Caco-2 (cell line): ENCODE measurements at regions of chr12 and their contacts with region 1.

Region 1: DNA sequence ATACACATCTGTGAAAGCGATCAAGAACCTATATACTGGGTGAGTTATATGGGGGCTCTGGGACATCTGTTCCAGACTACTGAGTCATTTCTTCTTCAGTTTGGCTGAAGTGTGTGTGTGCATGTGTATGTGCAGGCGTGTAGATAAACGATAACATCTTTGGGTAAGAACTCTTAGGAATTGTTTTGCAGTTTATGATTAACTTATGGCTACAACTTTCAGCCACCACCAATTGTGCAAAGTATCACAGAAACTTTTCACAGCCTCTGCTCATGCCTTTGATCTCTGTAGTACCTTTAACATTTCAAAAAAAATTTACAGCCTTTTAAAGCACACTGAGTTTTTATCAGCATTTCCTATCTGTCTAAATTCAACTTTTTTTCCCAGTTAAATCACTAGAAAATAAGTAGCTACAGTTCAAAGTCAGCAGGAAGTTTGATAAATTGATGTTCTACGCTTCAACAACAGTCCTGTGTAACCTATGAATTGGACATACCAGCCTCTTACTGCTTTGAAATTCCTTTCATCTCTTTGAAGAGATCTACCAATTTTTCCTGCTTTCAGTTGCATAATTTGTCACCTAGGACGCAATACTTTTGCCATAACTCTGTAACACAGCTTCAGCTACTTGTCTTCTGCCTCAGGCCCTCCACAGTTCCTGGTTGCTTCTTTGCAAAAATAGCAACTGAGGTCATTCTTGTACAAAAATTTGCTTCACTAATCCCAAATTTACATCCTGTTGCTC is 43.0 kb downstream of the PPM1H start:
- DNase-seq: peak; percentile 75 to 76
- H3K4me3 ChIP-seq: no peak overlapping the region
- H3K4me3 Mint-ChIP-seq: peak overlapping the region; percentile 56
- H3K27ac Mint-ChIP-seq: peak overlapping the region; percentile 92
- H3K4me1 ChIP-seq: peaks cover 74% of the 10 kb centered on the region
- H3K4me1 Mint-ChIP-seq: peaks cover 58% of the 10 kb centered on the region
- H3K27me3 ChIP-seq: no peaks in the 10 kb centered on the region
- H3K27me3 Mint-ChIP-seq: no peaks in the 10 kb centered on the region
- CTCF ChIP-seq: no peak

Region 2: GRCh38 chr12:62799126-62799736 is 92.7 kb before region 1 on chr12:
- CTCF ChIA-PET with region 1: no interaction called
- POLR2A ChIA-PET with region 1: no interaction called
- intact Hi-C with region 1: loop called (anchors 1 kb)
- DNase-seq: peak; percentile 73 to 78
- H3K4me3 ChIP-seq: no peak overlapping the region
- H3K4me3 Mint-ChIP-seq: no peak overlapping the region
- H3K27ac Mint-ChIP-seq: peak overlapping the region; percentile 80
- H3K4me1 ChIP-seq: peaks cover 64% of the 10 kb centered on the region
- H3K4me1 Mint-ChIP-seq: peaks cover 37% of the 10 kb centered on the region
- H3K27me3 ChIP-seq: no peaks in the 10 kb centered on the region
- H3K27me3 Mint-ChIP-seq: no peaks in the 10 kb centered on the region
- CTCF ChIP-seq: peak; percentile 79 to 86

Region 3: GRCh38 chr12:62866451-62867082 is 25.4 kb before region 1 on chr12:
- CTCF ChIA-PET with region 1: no interaction called
- POLR2A ChIA-PET with region 1: interaction called, 5 read pairs
- intact Hi-C with region 1: loop called (anchors 1 kb)
- DNase-seq: peak; percentile 76 to 86
- H3K4me3 ChIP-seq: no peak overlapping the region
- H3K4me3 Mint-ChIP-seq: peak overlapping the region; percentile 56
- H3K27ac Mint-ChIP-seq: peak overlapping the region; percentile 89
- H3K4me1 ChIP-seq: peaks cover 91% of the 10 kb centered on the region
- H3K4me1 Mint-ChIP-seq: peaks cover 46% of the 10 kb centered on the region
- H3K27me3 ChIP-seq: no peaks in the 10 kb centered on the region
- H3K27me3 Mint-ChIP-seq: no peaks in the 10 kb centered on the region
- CTCF ChIP-seq: no peak

Region 4: GRCh38 chr12:62934799-62935674 is 43.1 kb after region 1 on chr12 and contains the start of gene PPM1H:
- CTCF ChIA-PET with region 1: no interaction called
- POLR2A ChIA-PET with region 1: interaction called, 5 read pairs
- intact Hi-C with region 1: loop called (anchors 1 kb)
- DNase-seq: peak; percentile 97 to 98
- H3K4me3 ChIP-seq: peak within 1 kb of the TSS; percentile 96
- H3K4me3 Mint-ChIP-seq: peak within 1 kb of the TSS; percentile 77
- H3K27ac Mint-ChIP-seq: peak within 1 kb of the TSS; percentile 89
- H3K4me1 ChIP-seq: peaks cover 25% of the 10 kb centered on the region
- H3K4me1 Mint-ChIP-seq: peaks cover 15% of the 10 kb centered on the region
- H3K27me3 ChIP-seq: no peaks in the 10 kb centered on the region
- H3K27me3 Mint-ChIP-seq: no peaks in the 10 kb centered on the region
- CTCF ChIP-seq: peak; percentile 90 to 92
- total RNA-seq, gene PPM1H: 145 and 151 TPM in 2 replicates

Region 5: GRCh38 chr12:62947364-62947763 is 55.4 kb after region 1 on chr12:
- CTCF ChIA-PET with region 1: no interaction called
- POLR2A ChIA-PET with region 1: no interaction called
- intact Hi-C with region 1: no loop called
- DNase-seq: no peak
- H3K4me3 ChIP-seq: no peak overlapping the region
- H3K4me3 Mint-ChIP-seq: no peak overlapping the region
- H3K27ac Mint-ChIP-seq: no peak overlapping the region
- H3K4me1 ChIP-seq: 0 out of 2 replicates have a peak, but pooled peaks cover 9% of the 10 kb centered on the region
- H3K4me1 Mint-ChIP-seq: peaks cover 26% of the 10 kb centered on the region
- H3K27me3 ChIP-seq: no peaks in the 10 kb centered on the region
- H3K27me3 Mint-ChIP-seq: no peaks in the 10 kb centered on the region
- CTCF ChIP-seq: no peak

Region 6: GRCh38 chr12:63042646-63043045 is 150.7 kb after region 1 on chr12:
- CTCF ChIA-PET with region 1: no interaction called
- POLR2A ChIA-PET with region 1: no interaction called
- intact Hi-C with region 1: no loop called
- DNase-seq: no peak
- H3K4me3 ChIP-seq: no peak overlapping the region
- H3K4me3 Mint-ChIP-seq: no peak overlapping the region
- H3K27ac Mint-ChIP-seq: no peak overlapping the region
- H3K4me1 ChIP-seq: peaks cover 21% of the 10 kb centered on the region
- H3K4me1 Mint-ChIP-seq: peaks cover 7% of the 10 kb centered on the region
- H3K27me3 ChIP-seq: no peaks in the 10 kb centered on the region
- H3K27me3 Mint-ChIP-seq: no peaks in the 10 kb centered on the region
- CTCF ChIP-seq: no peak

Region 7: DNA sequence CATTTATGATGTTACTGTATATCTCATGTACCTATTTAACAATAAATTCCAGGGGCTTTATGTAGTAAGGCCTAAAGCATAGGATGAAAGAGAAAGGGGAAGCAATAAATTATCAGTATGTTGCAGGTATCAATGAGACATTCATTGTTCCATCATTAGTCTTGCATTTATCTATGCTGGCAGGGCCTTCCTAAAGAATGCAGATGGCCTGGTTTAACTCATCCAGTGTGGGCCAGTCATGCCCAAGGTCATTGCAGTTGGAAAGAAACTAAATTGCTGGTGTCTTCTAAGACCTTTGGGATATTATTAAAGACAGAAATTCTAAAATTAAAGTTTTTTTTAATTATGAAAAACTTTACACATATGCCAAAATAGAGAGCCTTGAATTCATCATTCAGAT is 160.7 kb after region 1 on chr12:
- CTCF ChIA-PET with region 1: no interaction called
- POLR2A ChIA-PET with region 1: no interaction called
- intact Hi-C with region 1: loop called (anchors 1 kb)
- DNase-seq: peak; percentile 64 to 75
- H3K4me3 ChIP-seq: no peak overlapping the region
- H3K4me3 Mint-ChIP-seq: no peak overlapping the region
- H3K27ac Mint-ChIP-seq: peak overlapping the region; percentile 30
- H3K4me1 ChIP-seq: peaks cover 34% of the 10 kb centered on the region
- H3K4me1 Mint-ChIP-seq: peaks cover 47% of the 10 kb centered on the region
- H3K27me3 ChIP-seq: no peaks in the 10 kb centered on the region
- H3K27me3 Mint-ChIP-seq: no peaks in the 10 kb centered on the region
- CTCF ChIP-seq: no peak